ENCODE measurements at regions of chrX and their contacts with region 1.

Region 1: DNA sequence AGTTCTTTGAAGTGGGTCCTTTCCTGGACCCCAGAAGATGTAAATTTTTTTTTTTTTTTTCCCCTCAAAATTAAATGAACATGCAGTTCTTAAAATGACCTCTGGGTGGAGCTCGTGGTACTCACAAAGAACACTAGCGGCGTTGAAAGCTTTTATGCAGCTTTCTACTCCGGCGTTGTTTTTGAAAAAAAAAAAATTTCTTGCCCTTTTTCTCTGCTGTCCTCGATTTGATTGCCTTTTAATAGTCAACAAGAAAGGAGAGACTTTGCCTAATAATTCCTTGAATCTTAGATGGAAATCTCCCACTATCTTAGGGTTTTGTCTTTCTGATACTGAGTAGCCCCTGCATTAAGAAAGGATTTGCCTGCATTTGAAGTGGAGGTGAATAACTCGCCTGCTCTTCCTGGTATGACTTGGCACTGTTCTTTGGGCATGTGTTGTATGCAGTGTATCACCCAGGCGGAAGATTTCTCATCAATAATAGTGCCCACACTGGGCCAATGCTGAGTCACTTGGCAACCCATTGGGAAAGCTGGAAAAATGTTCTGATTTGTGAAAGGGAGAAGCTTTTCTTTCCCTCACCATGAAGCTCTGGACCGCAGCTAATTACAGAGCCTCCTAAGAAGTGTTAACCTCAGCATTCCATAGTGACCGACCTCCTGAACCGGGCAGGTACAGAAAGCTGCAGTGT is 104.0 kb downstream of the PHEX start:
- DNase-seq: peak; percentile 83
- ATAC-seq: peak; percentile 70
- H3K4me3 ChIP-seq: peak overlapping the region; percentile 50; the same call in 1 of the 2 replicates
- H3K27ac ChIP-seq: peak overlapping the region; percentile 97
- H3K4me1 ChIP-seq: peaks cover 29% of the 10 kb centered on the region
- H3K27me3 ChIP-seq: no peaks in the 10 kb centered on the region
- CTCF ChIP-seq: peak; percentile 82

Region 2: DNA sequence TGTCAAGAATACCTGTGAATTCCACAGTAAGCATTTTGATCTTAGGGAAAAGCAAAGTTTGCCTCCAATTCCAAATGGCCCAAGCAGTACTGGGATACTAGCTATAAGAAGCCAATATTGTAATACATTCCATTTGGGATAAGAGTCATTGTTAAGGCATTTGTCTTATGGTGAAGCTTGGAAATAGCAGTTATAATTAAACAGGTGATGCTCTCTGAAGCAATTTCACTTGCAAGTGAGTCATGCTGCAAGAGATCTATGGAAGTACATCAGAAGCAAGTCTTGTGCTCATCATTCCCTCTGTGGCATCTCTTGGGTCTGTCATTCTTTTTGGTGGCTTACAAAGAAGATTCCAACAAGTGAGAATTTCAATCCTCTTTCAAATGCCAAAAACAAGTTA is 1483.1 kb before region 1 on chrX:
- CTCF ChIA-PET with region 1: no interaction called
- POLR2A ChIA-PET with region 1: no interaction called
- intact Hi-C with region 1: no loop called
- DNase-seq: peak; percentile 6
- ATAC-seq: no peak
- H3K4me3 ChIP-seq: no peak overlapping the region
- H3K27ac ChIP-seq: no peak overlapping the region
- H3K4me1 ChIP-seq: no peaks in the 10 kb centered on the region
- H3K27me3 ChIP-seq: no peaks in the 10 kb centered on the region
- CTCF ChIP-seq: no peak

Region 3: DNA sequence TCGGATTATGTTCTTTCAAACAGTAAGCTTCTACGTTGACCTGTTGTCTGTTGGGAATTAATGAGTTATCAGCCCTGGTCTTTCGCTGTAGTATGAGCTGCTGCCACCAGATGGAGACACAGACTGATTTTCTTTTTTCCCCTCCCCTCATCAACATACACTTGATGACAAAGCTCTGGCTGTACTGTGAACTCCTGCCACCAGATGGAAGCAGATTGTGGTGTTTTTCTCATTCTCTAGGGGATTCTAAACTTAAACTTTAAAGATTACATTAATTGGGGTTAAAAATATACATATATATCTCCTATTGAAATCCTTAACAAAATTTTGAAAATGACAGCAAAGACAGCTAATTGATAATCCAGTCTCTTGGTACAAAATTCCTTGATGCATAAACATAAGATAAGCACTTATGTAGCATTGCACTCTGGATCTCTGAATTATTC is 150.8 kb before region 1 on chrX:
- CTCF ChIA-PET with region 1: interaction called, 10 read pairs
- POLR2A ChIA-PET with region 1: no interaction called
- intact Hi-C with region 1: loop called (anchors 1 kb)
- DNase-seq: peak; percentile 82
- ATAC-seq: peak; percentile 89
- H3K4me3 ChIP-seq: no peak overlapping the region
- H3K27ac ChIP-seq: no peak overlapping the region
- H3K4me1 ChIP-seq: peaks cover 3% of the 10 kb centered on the region; the same call in 1 of the 2 replicates
- H3K27me3 ChIP-seq: no peaks in the 10 kb centered on the region
- CTCF ChIP-seq: peak; percentile 95

Region 4: GRCh38 chrX:22278374-22278773 is 142.2 kb after region 1 on chrX:
- CTCF ChIA-PET with region 1: no interaction called
- POLR2A ChIA-PET with region 1: no interaction called
- intact Hi-C with region 1: no loop called
- DNase-seq: peak; percentile 28
- ATAC-seq: peak; percentile 46; the same call in 1 of the 2 replicates
- H3K4me3 ChIP-seq: no peak overlapping the region
- H3K27ac ChIP-seq: no peak overlapping the region
- H3K4me1 ChIP-seq: no peaks in the 10 kb centered on the region
- H3K27me3 ChIP-seq: no peaks in the 10 kb centered on the region
- CTCF ChIP-seq: peak; percentile 48

Region 5: GRCh38 chrX:22300130-22300529 is 164.0 kb after region 1 on chrX:
- CTCF ChIA-PET with region 1: no interaction called
- POLR2A ChIA-PET with region 1: no interaction called
- intact Hi-C with region 1: loop called (anchors 5 kb)
- DNase-seq: peak; percentile 75
- ATAC-seq: peak; percentile 95
- H3K4me3 ChIP-seq: peak overlapping the region; percentile 46; the same call in 1 of the 2 replicates
- H3K27ac ChIP-seq: peak overlapping the region; percentile 38
- H3K4me1 ChIP-seq: peaks cover 17% of the 10 kb centered on the region
- H3K27me3 ChIP-seq: no peaks in the 10 kb centered on the region
- CTCF ChIP-seq: no peak

Region 6: GRCh38 chrX:22445880-22446279 is 309.7 kb after region 1 on chrX:
- CTCF ChIA-PET with region 1: no interaction called
- POLR2A ChIA-PET with region 1: no interaction called
- intact Hi-C with region 1: loop called (anchors 2 kb)
- DNase-seq: no peak
- ATAC-seq: no peak
- H3K4me3 ChIP-seq: no peak overlapping the region
- H3K27ac ChIP-seq: no peak overlapping the region
- H3K4me1 ChIP-seq: no peaks in the 10 kb centered on the region
- H3K27me3 ChIP-seq: no peaks in the 10 kb centered on the region
- CTCF ChIP-seq: no peak

Region 7: GRCh38 chrX:22748093-22748999 is 612.2 kb after region 1 on chrX:
- CTCF ChIA-PET with region 1: interaction called, 3 read pairs
- POLR2A ChIA-PET with region 1: no interaction called
- intact Hi-C with region 1: loop called (anchors 1 kb)
- DNase-seq: peak; percentile 63
- ATAC-seq: peak; percentile 82
- H3K4me3 ChIP-seq: no peak overlapping the region
- H3K27ac ChIP-seq: no peak overlapping the region
- H3K4me1 ChIP-seq: no peaks in the 10 kb centered on the region
- H3K27me3 ChIP-seq: no peaks in the 10 kb centered on the region
- CTCF ChIP-seq: peak; percentile 78

Measured in PC-3 (cell line).